WTC11 (cell line): ENCODE measurements at regions of chr4 and their contacts with region 1.

Region 1: GRCh38 chr4:86921608-86922252 is 13.1 kb upstream of the AFF1 start:
- DNase-seq: no peak
- ATAC-seq: no peak
- H3K4me3 Mint-ChIP-seq: no peak overlapping the region
- H3K27ac Mint-ChIP-seq: no peak overlapping the region
- H3K4me1 Mint-ChIP-seq: peaks cover 5% of the 10 kb centered on the region; the same call in 1 of the 2 replicates
- H3K27me3 Mint-ChIP-seq: peaks cover 2% of the 10 kb centered on the region; the same call in 1 of the 2 replicates
- CTCF ChIP-seq: no peak

Region 2: DNA sequence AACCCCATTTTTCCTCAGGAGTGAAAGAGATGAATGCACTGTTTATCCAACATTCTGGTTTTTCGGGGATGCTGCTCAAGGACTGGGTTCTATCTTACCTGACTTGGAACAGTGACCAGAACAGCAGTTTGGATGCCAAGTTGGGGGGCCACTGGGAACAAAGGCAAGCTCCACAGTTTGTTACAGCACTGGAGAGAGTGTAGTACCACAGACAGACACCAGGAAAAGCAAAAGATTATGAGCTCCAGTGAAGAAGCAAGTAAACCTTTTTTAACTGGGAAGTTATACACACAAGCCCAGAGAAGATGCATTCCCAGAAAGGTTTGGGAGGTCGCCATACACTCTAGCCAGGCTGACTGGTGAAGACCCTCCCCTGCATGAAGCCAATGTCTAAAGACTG is 43.1 kb before region 1 on chr4:
- CTCF ChIA-PET with region 1: no interaction called
- POLR2A ChIA-PET with region 1: no interaction called
- DNase-seq: no peak
- ATAC-seq: peak; percentile 90
- H3K4me3 Mint-ChIP-seq: no peak overlapping the region
- H3K27ac Mint-ChIP-seq: no peak overlapping the region
- H3K4me1 Mint-ChIP-seq: peaks cover 7% of the 10 kb centered on the region
- H3K27me3 Mint-ChIP-seq: no peaks in the 10 kb centered on the region; the same call in 1 of the 2 replicates
- CTCF ChIP-seq: peak; percentile 17; the same call in 1 of the 2 replicates

Region 3: DNA sequence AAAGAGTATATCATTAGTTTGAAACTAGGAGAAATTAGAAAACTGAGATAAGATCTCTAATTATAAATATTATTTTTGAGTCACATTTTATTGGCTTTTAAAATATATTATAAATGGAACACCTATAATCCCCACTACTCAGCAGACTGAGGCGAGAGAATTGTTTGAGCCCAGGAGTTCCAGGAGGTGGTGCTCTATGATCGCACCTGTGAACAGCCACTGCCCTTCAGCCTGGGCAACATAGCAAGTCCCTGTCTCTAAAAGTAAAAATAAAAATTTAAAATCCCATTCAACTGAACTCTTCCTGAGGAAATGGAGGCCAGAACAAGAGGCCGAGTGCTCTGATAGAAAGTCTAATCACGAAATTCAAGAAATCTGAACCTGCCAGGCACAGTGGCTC is 23.2 kb before region 1 on chr4:
- CTCF ChIA-PET with region 1: interaction called, 29 read pairs
- POLR2A ChIA-PET with region 1: no interaction called
- DNase-seq: no peak
- ATAC-seq: peak; percentile 79
- H3K4me3 Mint-ChIP-seq: no peak overlapping the region
- H3K27ac Mint-ChIP-seq: no peak overlapping the region
- H3K4me1 Mint-ChIP-seq: no peaks in the 10 kb centered on the region
- H3K27me3 Mint-ChIP-seq: peaks cover 11% of the 10 kb centered on the region
- CTCF ChIP-seq: no peak

Region 4: GRCh38 chr4:86961605-86962295 is 40.0 kb after region 1 on chr4:
- CTCF ChIA-PET with region 1: interaction called, 23 read pairs
- POLR2A ChIA-PET with region 1: no interaction called
- DNase-seq: no peak
- ATAC-seq: no peak
- H3K4me3 Mint-ChIP-seq: peak overlapping the region; percentile 68
- H3K27ac Mint-ChIP-seq: peak overlapping the region; percentile 99
- H3K4me1 Mint-ChIP-seq: peaks cover 59% of the 10 kb centered on the region
- H3K27me3 Mint-ChIP-seq: no peaks in the 10 kb centered on the region
- CTCF ChIP-seq: no peak

Region 5: DNA sequence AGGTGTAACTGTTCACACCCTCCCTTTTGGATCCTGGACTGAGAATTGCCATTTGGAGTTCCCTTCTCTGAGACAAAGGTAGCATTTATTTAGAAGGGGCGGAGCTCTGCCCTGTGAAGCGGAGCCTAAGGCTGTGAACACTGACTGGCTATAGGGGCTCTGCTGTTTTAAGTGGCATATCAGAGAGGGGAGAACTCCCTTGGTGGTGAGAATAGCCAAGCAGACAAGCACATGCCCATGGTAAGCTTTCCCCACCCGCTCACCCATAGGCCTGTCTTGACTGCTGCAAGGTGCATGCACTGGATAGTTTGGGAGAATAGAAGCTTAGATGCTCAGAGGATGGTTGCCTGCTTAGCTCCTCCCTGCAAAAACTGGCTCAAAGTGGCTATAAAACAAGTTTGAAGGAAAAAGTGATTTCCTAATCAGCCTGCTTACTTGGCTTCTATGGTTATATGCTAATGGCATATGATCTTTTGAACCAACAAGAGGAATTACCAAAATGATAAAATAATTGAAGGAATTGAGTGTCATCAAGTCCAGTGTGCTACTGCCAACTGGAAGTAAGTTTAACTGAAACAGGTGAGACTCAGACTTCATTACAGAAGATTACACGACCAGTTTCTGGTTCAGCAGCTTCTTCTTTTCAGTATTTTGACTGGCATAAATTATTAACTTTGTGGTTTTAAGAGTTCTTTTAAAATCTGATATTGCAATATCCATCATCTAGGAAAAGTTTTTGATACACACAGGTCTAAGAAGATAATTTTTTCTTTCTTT is 121.5 kb after region 1 on chr4:
- CTCF ChIA-PET with region 1: interaction called, 15 read pairs
- POLR2A ChIA-PET with region 1: no interaction called
- DNase-seq: no peak
- ATAC-seq: peak; percentile 59
- H3K4me3 Mint-ChIP-seq: no peak overlapping the region
- H3K27ac Mint-ChIP-seq: no peak overlapping the region
- H3K4me1 Mint-ChIP-seq: peaks cover 29% of the 10 kb centered on the region
- H3K27me3 Mint-ChIP-seq: no peaks in the 10 kb centered on the region
- CTCF ChIP-seq: no peak

Region 6: DNA sequence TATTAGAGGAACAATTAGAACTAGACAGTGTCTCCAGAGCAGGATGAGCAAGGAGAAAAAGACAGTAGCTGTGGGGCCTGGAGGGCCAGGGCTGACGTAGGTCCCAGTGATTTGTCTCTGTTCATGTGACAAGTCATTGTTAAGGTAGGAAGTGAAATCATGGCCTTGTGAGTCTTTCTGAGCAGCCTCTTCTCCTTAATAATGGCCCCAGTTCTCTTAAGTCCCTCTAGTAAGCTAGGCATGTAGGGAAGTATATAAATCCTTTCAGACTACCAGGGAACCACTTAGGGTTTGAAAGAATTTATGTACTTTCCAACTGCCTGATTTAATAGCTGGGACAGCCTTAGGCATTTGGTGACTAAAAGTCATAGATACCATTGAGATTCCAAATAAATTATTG is 165.7 kb after region 1 on chr4:
- CTCF ChIA-PET with region 1: interaction called, 68 read pairs
- POLR2A ChIA-PET with region 1: interaction called, 6 read pairs
- DNase-seq: no peak
- ATAC-seq: 0 out of 2 replicates have a peak, but pooled peaks have one; percentile 16
- H3K4me3 Mint-ChIP-seq: no peak overlapping the region
- H3K27ac Mint-ChIP-seq: peak overlapping the region; percentile 29
- H3K4me1 Mint-ChIP-seq: peaks cover 31% of the 10 kb centered on the region
- H3K27me3 Mint-ChIP-seq: no peaks in the 10 kb centered on the region
- CTCF ChIP-seq: no peak

Region 7: DNA sequence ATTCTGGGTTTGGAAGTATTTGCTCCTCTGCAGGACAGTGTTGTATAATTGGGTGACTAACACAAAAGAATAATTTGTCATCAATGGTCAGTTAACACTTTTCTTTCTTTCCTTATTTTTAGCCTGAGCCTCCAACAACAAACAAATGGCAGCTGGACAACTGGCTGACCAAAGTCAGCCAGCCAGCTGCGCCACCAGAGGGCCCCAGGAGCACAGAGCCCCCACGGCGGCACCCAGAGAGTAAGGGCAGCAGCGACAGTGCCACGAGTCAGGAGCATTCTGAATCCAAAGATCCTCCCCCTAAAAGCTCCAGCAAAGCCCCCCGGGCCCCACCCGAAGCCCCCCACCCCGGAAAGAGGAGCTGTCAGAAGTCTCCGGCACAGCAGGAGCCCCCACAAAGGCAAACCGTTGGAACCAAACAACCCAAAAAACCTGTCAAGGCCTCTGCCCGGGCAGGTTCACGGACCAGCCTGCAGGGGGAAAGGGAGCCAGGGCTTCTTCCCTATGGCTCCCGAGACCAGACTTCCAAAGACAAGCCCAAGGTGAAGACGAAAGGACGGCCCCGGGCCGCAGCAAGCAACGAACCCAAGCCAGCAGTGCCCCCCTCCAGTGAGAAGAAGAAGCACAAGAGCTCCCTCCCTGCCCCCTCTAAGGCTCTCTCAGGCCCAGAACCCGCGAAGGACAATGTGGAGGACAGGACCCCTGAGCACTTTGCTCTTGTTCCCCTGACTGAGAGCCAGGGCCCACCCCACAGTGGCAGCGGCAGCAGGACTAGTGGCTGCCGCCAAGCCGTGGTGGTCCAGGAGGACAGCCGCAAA is 192.7 kb after region 1 on chr4:
- CTCF ChIA-PET with region 1: interaction called, 33 read pairs
- POLR2A ChIA-PET with region 1: no interaction called
- DNase-seq: peak; percentile 67
- ATAC-seq: peak; percentile 85
- H3K4me3 Mint-ChIP-seq: no peak overlapping the region
- H3K27ac Mint-ChIP-seq: peak overlapping the region; percentile 78
- H3K4me1 Mint-ChIP-seq: peaks cover 36% of the 10 kb centered on the region
- H3K27me3 Mint-ChIP-seq: no peaks in the 10 kb centered on the region
- CTCF ChIP-seq: no peak